ENCODE measurements at regions of chr2 and their contacts with region 1.

Region 1: DNA sequence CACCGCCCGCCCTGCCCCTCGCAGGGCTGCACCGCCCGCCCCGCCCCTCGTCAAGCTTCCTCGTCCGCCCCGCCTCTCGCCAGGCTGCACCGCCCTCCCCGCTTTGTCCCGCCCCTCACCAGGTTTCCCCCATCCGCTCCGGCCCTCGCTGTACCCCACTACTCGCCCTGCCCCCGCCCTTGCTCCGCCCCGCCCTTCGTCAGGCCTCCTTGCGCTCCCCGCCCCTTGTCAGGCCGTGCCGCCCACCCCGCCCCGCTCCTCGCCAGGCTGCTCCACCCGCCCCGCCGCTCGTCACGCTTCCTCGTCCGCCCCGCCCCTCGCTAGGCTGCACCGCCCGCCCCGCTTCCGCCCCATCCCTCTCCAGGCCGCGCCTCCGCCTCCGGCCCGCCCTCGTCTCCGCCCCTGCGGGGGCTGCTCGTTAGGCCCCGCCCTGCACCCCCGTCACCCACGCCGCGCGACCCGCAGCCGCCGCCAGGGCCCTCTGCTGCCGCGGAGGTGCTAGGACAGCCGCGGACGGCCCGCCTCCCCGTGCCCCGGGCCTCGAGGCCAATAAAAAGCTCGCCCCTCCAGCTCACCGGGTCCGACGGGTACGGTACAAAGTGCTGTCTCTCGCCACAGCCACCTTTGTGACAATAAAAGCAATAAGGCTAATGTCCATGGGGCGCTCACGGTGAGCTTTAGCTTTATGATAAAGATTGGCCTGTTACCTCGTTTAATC is 574 bp upstream of the DNPEP start:
- DNase-seq: peak; percentile 99
- ATAC-seq: peak; percentile 77
- H3K4me3 Mint-ChIP-seq: peak overlapping the region; percentile 75
- H3K27ac Mint-ChIP-seq: peak overlapping the region; percentile 76
- H3K4me1 Mint-ChIP-seq: peaks cover 8% of the 10 kb centered on the region
- H3K27me3 Mint-ChIP-seq: peaks cover 4% of the 10 kb centered on the region

Region 2: DNA sequence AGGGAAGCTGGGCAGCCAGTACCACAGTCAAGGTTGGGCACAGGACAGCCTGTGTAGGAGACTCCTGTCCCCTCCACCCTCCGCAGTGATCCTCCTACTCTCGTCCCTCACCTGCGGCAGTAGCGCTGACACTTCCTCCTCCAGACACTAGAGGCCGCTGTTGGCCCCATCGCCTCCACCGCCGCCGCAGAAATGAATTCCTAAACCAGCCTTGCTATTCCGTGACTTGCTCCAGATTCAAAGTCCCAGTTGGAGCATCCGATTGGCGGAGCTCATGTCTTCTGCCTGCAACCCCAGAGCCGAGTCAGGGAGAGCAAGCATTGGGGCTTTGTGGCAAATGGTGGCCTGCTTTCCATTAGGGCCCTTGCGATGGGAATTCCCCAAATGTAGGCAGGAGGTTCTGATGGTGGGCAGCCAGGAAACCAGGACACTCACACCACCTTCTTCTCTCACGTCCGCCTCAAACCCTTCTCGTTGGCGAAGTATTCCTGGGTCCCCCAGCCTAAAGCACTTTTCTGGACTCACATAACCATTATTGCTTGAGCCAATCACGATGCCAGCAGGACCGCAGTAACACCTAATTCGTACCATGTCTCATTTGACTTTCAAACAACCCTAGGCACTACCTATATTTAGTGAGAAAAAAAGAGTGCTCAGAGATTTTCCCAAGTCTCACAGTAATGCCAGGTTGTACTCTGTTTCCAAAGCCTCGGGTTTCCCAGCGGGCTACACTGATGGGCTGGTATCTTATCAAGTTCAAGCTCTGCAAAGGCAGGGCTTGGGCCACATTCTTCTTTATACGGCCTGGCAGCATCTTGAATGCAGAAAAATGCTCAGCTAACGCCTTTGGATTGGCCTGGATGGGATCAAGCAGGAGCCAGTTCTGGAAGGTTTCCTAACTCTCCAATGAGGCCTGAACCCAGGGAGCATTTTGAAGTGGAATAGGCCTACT is 110.3 kb before region 1 on chr2:
- POLR2A ChIA-PET with region 1: no interaction called
- DNase-seq: peak; percentile 81
- ATAC-seq: no peak
- H3K4me3 Mint-ChIP-seq: peak overlapping the region; percentile 98
- H3K27ac Mint-ChIP-seq: peak overlapping the region; percentile 97
- H3K4me1 Mint-ChIP-seq: peaks cover 43% of the 10 kb centered on the region
- H3K27me3 Mint-ChIP-seq: peaks cover 4% of the 10 kb centered on the region

Region 3: GRCh38 chr2:219498280-219499057 is 110.2 kb after region 1 on chr2 and contains the start of gene GMPPA:
- POLR2A ChIA-PET with region 1: interaction called, 13 read pairs
- DNase-seq: peak; percentile 92
- ATAC-seq: peak; percentile 92
- H3K4me3 Mint-ChIP-seq: peak within 1 kb of the TSS; percentile 93
- H3K27ac Mint-ChIP-seq: peak within 1 kb of the TSS; percentile 73
- H3K4me1 Mint-ChIP-seq: peaks cover 22% of the 10 kb centered on the region
- H3K27me3 Mint-ChIP-seq: peaks cover 43% of the 10 kb centered on the region
- total RNA-seq, gene GMPPA: 31.3 to 32.6 TPM

Measured in activated naive CD8-positive, alpha-beta T cell treated with anti-CD3 and anti-CD28 coated beads, Interleukin-2, amount 10 ng/mL, durations not matched to agents 7 days and 5 days (primary cell).